HepG2 (cell line): ENCODE measurements at regions of chr4 and their contacts with region 1.

Region 1: DNA sequence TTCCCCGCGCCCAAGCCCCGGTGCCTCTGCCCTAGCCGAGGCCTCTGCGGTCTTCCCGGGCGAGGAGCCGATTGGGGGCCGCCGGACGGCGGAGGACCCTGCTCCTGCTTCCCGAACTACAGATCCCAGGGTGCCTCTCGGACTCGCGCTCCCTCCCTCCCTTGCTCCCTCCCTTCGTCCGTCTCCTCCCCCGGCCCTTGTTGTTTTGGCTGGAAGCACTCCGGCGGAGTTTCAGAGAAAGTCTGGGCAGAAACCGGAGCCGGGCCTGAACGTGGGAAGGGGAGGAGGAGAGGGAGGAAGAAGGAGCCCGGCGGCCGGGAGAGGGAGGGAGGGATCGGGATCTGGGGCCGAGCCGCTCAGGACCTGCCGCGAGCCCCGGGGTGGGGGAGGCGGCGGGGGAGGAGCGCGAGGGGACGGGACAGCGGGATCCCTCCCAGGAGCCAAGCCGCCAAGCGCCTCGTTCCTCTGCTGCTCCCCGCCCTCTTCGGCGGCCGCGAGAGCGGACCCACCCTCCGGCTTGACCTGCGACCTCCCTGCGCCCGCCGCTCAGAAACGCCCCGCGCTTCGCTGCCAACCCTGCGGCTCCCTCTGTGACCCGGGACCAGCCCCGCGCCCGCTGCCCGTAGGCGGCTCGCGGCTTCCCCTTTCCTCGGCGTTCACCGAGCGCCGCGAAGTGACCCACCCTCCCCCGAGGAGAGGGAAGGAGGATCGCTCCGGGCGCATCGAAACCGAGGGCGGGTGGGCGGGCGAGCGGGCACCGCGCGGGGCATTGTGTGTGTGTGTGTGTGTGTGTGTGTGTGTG is 496 bp upstream of the GAB1 start:
- DNase-seq: peak; percentile 71
- ATAC-seq: peak; percentile 84
- H3K4me3 ChIP-seq: peak overlapping the region; percentile 86 to 99 (median 89)
- H3K27ac ChIP-seq: peak overlapping the region; percentile 88
- H3K4me1 ChIP-seq: peaks cover 24% of the 10 kb centered on the region
- H3K27me3 ChIP-seq: no peaks in the 10 kb centered on the region
- CTCF ChIP-seq: no peak
- EP300 ChIP-seq: no peak
- POLR2A ChIP-seq: peak; percentile 37 to 65; a peak in 2 of 4 replicates
- RAD21 ChIP-seq: no peak

Region 2: GRCh38 chr4:142043509-142043908 is 1292.7 kb before region 1 on chr4:
- CTCF ChIA-PET with region 1: no interaction called
- POLR2A ChIA-PET with region 1: no interaction called
- in situ Hi-C with region 1: no loop called
- intact Hi-C with region 1: no loop called
- DNase-seq: no peak
- ATAC-seq: no peak
- H3K4me3 ChIP-seq: no peak overlapping the region
- H3K27ac ChIP-seq: no peak overlapping the region
- H3K4me1 ChIP-seq: no peaks in the 10 kb centered on the region
- H3K27me3 ChIP-seq: no peaks in the 10 kb centered on the region
- CTCF ChIP-seq: no peak
- EP300 ChIP-seq: no peak
- POLR2A ChIP-seq: no peak
- RAD21 ChIP-seq: no peak

Region 3: DNA sequence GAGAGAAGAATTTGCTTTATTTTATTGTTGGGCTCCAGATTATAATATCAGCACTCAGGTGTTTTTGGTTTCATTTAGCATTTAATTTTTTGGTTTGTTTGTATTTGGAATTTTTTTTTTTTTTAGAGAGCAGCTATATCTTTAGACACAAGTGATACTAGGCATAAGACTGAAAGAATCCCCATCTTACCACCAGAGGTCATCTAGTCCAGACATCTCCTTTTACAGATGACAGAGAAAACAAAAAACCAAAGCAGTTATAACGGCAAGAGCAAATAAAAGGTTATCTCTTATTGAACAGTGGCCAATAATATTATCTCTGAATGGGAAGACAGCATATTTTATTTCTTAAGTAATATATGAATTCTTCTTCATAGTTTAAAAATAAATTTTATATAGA is 128.6 kb before region 1 on chr4:
- CTCF ChIA-PET with region 1: no interaction called
- POLR2A ChIA-PET with region 1: no interaction called
- in situ Hi-C with region 1: no loop called
- intact Hi-C with region 1: loop called (anchors 5 kb)
- DNase-seq: peak; percentile 20
- ATAC-seq: peak; percentile 67; the same call in 2 of the 3 replicates
- H3K4me3 ChIP-seq: no peak overlapping the region
- H3K27ac ChIP-seq: no peak overlapping the region
- H3K4me1 ChIP-seq: no peaks in the 10 kb centered on the region
- H3K27me3 ChIP-seq: no peaks in the 10 kb centered on the region; a peak in 1 of 5 replicates
- CTCF ChIP-seq: peak; percentile 37
- EP300 ChIP-seq: no peak
- POLR2A ChIP-seq: no peak
- RAD21 ChIP-seq: no peak

Region 4: GRCh38 chr4:143346206-143346605 is 10.0 kb after region 1 on chr4:
- CTCF ChIA-PET with region 1: no interaction called
- POLR2A ChIA-PET with region 1: interaction called, 11 read pairs
- in situ Hi-C with region 1: no loop called
- intact Hi-C with region 1: no loop called
- DNase-seq: no peak
- ATAC-seq: no peak
- H3K4me3 ChIP-seq: no peak overlapping the region
- H3K27ac ChIP-seq: no peak overlapping the region
- H3K4me1 ChIP-seq: peaks cover 19% of the 10 kb centered on the region
- H3K27me3 ChIP-seq: no peaks in the 10 kb centered on the region
- CTCF ChIP-seq: no peak
- EP300 ChIP-seq: no peak
- POLR2A ChIP-seq: no peak
- RAD21 ChIP-seq: no peak

Region 5: DNA sequence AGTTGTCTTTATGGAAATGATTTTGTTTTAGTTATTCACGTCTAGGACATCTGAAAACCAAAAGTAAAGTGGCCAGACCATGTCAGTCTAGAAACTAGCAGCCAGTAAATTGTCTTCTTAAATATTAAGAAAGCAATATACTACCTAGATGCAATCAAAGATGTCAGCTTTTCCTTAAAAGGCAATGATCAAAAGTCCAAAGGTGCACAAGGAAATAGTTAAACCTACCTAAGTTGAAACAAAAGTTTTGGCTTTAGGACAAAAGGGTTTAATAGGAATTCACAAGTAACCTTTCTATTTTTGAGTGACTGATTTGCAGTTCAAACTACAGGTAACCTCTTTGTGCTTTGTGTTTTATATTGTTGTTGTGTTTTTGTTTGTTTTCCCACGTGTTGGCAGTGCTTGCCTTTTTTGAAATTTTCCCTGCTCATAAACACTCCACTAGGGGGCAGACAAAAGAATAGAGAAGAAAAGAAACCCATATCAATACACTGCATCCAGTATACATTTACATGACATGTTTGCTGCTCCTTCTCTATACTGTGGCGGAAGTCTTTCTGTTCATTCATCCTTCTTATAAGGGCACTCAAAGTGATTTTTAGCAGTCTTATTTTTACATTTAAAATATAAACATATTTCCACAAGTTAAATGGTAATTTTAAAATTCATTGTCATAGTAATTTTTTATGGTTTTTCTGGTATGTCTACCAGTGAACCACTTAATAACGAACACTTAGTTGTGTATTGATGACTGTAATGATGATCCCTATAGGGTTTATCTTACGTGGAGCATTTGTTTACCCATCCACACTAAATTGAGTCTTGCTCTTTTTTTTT is 63.2 kb after region 1 on chr4:
- CTCF ChIA-PET with region 1: interaction called, 5 read pairs
- POLR2A ChIA-PET with region 1: no interaction called
- in situ Hi-C with region 1: no loop called
- intact Hi-C with region 1: loop called (anchors 5 kb)
- DNase-seq: peak; percentile 39
- ATAC-seq: peak; percentile 60; the same call in 2 of the 3 replicates
- H3K4me3 ChIP-seq: no peak overlapping the region
- H3K27ac ChIP-seq: no peak overlapping the region
- H3K4me1 ChIP-seq: peaks cover 6% of the 10 kb centered on the region
- H3K27me3 ChIP-seq: no peaks in the 10 kb centered on the region
- CTCF ChIP-seq: peak; percentile 53
- EP300 ChIP-seq: no peak
- POLR2A ChIP-seq: no peak
- RAD21 ChIP-seq: no peak

Region 6: DNA sequence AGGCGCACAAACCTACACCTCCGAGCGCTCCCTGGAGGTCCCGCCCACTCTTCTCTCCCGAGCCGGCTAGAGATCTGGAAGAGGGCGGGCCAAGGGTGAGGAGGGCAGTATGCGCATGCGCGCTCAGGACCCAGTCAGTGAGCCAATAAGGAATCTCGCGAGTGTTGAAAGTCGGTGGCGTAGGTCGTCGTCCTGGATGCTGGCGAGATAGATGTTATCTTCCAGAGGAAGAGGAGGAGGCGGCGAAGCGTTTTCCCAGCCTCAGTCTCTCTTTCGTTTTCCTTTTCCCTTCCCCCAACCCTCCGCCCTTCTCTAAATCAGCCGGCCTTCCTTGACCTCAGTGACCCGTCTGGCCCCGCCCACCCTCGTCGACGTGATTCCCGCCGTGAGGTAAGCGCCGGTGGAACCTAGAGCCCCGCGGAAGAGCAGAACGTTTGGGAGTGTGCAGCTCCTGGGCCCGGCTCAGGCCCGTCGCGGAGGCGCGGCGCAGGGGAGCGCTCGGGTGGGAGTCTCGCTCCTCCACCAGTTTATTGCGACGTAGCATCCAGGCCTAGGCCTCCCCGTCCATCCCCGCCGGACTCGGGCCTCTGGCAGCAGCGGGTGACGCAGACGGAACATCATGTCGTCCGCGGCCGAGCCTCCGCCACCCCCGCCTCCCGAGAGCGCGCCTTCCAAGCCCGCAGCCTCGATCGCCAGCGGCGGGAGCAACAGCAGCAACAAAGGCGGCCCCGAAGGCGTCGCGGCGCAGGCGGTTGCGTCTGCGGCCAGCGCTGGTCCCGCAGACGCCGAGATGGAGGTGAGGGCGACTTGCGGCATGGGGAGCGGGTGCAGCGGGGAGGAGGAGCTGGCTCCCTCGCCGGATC is 177.4 kb after region 1 on chr4 and contains the start of gene SMARCA5:
- CTCF ChIA-PET with region 1: no interaction called
- POLR2A ChIA-PET with region 1: interaction called, 8 read pairs
- in situ Hi-C with region 1: no loop called
- intact Hi-C with region 1: loop called (anchors 10 kb)
- DNase-seq: peak; percentile 96
- ATAC-seq: peak; percentile 91
- H3K4me3 ChIP-seq: peak within 1 kb of the TSS; percentile 83 to 93 (median 87)
- H3K27ac ChIP-seq: peak within 1 kb of the TSS; percentile 87
- H3K4me1 ChIP-seq: peaks cover 44% of the 10 kb centered on the region
- H3K27me3 ChIP-seq: no peaks in the 10 kb centered on the region; a peak in 1 of 5 replicates
- CTCF ChIP-seq: peak; percentile 33
- EP300 ChIP-seq: no peak
- POLR2A ChIP-seq: peak; percentile 85 to 90
- RAD21 ChIP-seq: 0 out of 2 replicates have a peak, but pooled peaks have one; percentile 34
- total RNA-seq, gene SMARCA5: 37.5 and 58.4 TPM in 2 replicates